ENCODE measurements at regions of chr17 and their contacts with region 1.

Region 1: GRCh38 chr17:50547035-50547735 is at the start of gene SPATA20:
- DNase-seq: peak; percentile 95
- ATAC-seq: peak; percentile 88
- total RNA-seq, gene SPATA20: 60.4 TPM

Region 2: GRCh38 chr17:50613007-50613992 is 66.1 kb after region 1 on chr17:
- intact Hi-C with region 1: loop called (anchors 1 kb)
- DNase-seq: no peak
- ATAC-seq: no peak

Region 3: DNA sequence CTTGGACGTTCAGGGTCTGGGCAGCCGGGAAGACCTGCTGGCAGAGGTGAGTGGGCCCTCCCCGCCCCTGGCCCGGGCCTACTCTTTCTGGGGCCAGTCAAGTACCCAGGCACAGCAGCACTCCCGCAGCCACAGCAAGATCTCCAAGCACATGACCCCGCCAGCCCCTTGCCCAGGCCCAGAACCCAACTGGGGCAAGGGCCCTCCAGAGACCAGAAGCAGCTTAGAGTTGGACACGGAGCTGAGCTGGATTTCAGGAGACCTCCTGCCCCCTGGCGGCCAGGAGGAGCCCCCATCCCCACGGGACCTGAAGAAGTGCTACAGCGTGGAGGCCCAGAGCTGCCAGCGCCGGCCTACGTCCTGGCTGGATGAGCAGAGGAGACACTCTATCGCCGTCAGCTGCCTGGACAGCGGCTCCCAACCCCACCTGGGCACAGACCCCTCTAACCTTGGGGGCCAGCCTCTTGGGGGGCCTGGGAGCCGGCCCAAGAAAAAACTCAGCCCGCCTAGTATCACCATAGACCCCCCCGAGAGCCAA is 78.9 kb after region 1 on chr17:
- intact Hi-C with region 1: loop called (anchors 1 kb)
- DNase-seq: peak; percentile 84
- ATAC-seq: peak; percentile 80

Region 4: GRCh38 chr17:50681263-50682210 is 134.4 kb after region 1 on chr17:
- intact Hi-C with region 1: loop called (anchors 5 kb)
- DNase-seq: peak; percentile 61
- ATAC-seq: peak; percentile 48

Region 5: GRCh38 chr17:50841949-50842354 is 294.8 kb after region 1 on chr17:
- intact Hi-C with region 1: loop called (anchors 2 kb)
- DNase-seq: no peak
- ATAC-seq: peak; percentile 58

Region 6: GRCh38 chr17:50949989-50950881 is 403.1 kb after region 1 on chr17:
- intact Hi-C with region 1: loop called (anchors 10 kb)
- DNase-seq: peak; percentile 87
- ATAC-seq: peak; percentile 76

Measured in Right ventricle myocardium inferior (tissue), 1 donor.